Activated T-helper 1 cell treated with anti-CD3 and anti-CD28 coated beads, Interleukin-12 subunit alpha, Interleukin-12 subunit beta, Interleukin-2, Interleukin-4 antibody, amounts not matched to agents 30 ng/mL and 10 ng/mL and 1 ng/mL, durations not matched to agents 14 hours and 24 hours and 36 hours (primary cell): ENCODE measurements at regions of chr16 and their contacts with region 1.

Region 1: DNA sequence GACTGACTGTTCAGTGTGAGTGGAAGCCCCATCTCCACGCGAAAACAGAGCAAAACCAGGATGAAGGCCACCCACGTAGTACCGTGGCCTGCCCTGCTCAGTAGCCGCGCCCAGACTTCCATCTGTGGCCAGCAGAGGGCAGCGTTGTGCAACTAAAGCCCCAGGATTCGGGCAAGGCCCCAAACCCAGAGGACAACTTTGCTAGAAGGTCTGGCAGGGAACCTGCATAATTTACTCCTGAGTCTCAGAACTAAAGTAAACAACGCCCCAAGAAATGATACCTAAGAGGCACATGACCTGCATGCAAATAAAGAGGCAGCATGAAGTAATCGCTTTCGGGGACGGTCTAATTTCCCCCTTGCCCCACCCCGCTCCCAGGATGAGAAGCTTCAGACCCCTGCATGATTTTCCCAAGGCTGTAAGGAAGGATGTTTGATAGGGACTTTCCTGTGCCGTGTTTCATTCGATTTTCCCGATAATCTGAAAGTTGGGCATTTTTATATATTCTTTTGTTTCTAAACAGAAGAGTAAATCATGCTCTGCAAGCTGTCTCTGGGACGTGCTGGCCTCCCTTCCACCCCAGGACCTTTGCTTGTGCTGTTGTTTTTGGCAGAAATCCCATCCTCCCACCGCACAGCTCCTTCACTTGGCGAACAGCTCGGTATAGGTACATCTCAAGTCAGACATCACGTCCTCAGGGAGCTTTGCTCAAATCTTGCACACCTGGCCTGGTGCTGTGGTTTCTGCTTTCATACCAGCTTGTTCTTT is 18.6 kb downstream of the HSBP1 start:
- DNase-seq: peak; percentile 70
- H3K4me3 Mint-ChIP-seq: no peak overlapping the region
- H3K27ac Mint-ChIP-seq: no peak overlapping the region
- H3K4me1 Mint-ChIP-seq: no peaks in the 10 kb centered on the region
- H3K27me3 Mint-ChIP-seq: peaks cover 6% of the 10 kb centered on the region

Region 2: DNA sequence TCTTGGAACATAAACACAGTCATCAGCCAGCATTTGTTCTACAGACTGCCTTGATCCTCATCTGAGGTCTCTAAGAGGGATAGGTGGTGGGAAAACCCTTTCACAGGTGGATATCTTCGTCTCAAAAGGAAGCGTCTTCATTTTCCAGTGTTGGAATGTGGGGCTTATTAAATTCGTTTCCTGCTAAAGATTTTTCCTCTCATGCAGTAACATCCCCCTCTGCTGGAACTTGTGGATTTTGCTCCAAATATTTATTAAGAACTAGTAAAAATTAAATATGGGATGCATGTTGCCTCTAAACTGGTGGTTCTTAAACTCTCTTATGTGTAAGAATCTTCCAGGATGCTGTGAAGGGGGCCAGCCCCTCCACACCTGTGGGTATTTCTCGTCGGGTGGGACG is 52.5 kb after region 1 on chr16:
- intact Hi-C with region 1: loop called (anchors 1 kb)
- DNase-seq: no peak
- H3K4me3 Mint-ChIP-seq: no peak overlapping the region
- H3K27ac Mint-ChIP-seq: no peak overlapping the region
- H3K4me1 Mint-ChIP-seq: no peaks in the 10 kb centered on the region
- H3K27me3 Mint-ChIP-seq: peaks cover 4% of the 10 kb centered on the region

Region 3: GRCh38 chr16:83898463-83899271 is 72.3 kb after region 1 on chr16 and contains the start of gene MLYCD:
- intact Hi-C with region 1: loop called (anchors 1 kb)
- DNase-seq: peak; percentile 73
- H3K4me3 Mint-ChIP-seq: peak within 1 kb of the TSS; percentile 94
- H3K27ac Mint-ChIP-seq: peak within 1 kb of the TSS; percentile 77
- H3K4me1 Mint-ChIP-seq: peaks cover 27% of the 10 kb centered on the region
- H3K27me3 Mint-ChIP-seq: peaks cover 10% of the 10 kb centered on the region
- total RNA-seq, gene MLYCD: 5.0 and 6.1 TPM in 2 replicates

Region 4: GRCh38 chr16:83926726-83927397 is 100.5 kb after region 1 on chr16:
- intact Hi-C with region 1: loop called (anchors 1 kb)
- DNase-seq: peak; percentile 17
- H3K4me3 Mint-ChIP-seq: no peak overlapping the region
- H3K27ac Mint-ChIP-seq: no peak overlapping the region
- H3K4me1 Mint-ChIP-seq: no peaks in the 10 kb centered on the region
- H3K27me3 Mint-ChIP-seq: no peaks in the 10 kb centered on the region

Region 5: GRCh38 chr16:84065536-84066132 is 239.3 kb after region 1 on chr16:
- intact Hi-C with region 1: loop called (anchors 1 kb)
- DNase-seq: peak; percentile 21
- H3K4me3 Mint-ChIP-seq: no peak overlapping the region
- H3K27ac Mint-ChIP-seq: no peak overlapping the region
- H3K4me1 Mint-ChIP-seq: no peaks in the 10 kb centered on the region
- H3K27me3 Mint-ChIP-seq: no peaks in the 10 kb centered on the region